Heart left ventricle (tissue), 16 donors: ENCODE measurements at regions of chr12 and their contacts with region 1.

Region 1: DNA sequence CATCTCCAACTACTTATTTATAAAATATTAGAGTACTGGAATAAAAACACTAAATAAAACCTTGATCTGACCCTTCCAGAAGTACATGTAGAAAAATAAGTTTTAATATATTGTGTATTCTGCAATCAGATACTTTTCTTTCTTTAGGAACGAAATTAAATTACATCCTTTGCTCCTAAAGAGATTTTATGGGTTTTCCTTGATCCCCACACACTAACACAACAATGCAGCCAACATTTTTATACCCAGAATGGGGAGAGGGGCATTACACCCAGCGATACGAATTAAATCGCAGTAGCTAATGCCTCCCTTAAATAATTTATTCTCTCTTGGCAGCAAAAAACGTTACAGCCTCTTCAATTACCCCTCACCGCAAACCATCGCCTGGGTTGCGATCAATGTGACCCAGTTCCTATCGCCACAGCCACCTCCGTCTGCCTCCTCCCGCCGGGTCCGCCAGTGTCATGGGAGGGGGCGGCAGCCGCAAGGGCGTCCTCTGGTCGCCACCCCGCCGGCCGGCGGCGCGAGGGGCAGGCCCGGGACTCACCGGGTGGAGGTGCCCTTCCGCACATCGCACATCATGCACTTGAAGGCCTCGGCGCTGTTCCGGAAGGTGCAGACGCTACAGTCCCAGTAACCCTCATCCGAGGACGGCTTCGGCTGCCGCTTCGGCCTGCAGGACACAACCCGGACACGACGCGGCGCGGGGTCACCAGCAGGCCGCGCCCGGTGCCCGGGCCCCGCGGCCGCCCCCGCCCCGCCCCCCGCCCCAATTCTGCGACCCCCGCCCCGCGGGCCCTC is 796 bp downstream of the YAF2 start:
- DNase-seq: peak; percentile 75 to 89 (median 82)
- ATAC-seq: peak; percentile 67 to 83 (median 75)
- H3K4me3 ChIP-seq: peak overlapping the region; percentile 56 to 98 (median 78)
- H3K27ac ChIP-seq: peak overlapping the region; percentile 82 to 97 (median 94)
- H3K4me1 ChIP-seq: peaks cover 0 to 57% (median 29%) of the 10 kb centered on the region in 12 donors
- H3K27me3 ChIP-seq: no peaks in the 10 kb centered on the region
- CTCF ChIP-seq: peak in 9 of 12 donors; percentile 10 to 60 (median 44)
- POLR2A ChIP-seq: no peak

Region 2: GRCh38 chr12:42196723-42197603 is 40.3 kb before region 1 on chr12:
- intact Hi-C with region 1: loop called in 1 of 10 experiments (anchors 5 kb)
- DNase-seq: no peak
- ATAC-seq: no peak
- H3K4me3 ChIP-seq: no peak overlapping the region
- H3K27ac ChIP-seq: no peak overlapping the region
- H3K4me1 ChIP-seq: peaks cover 0 to 32% (median 20%) of the 10 kb centered on the region in 12 donors
- H3K27me3 ChIP-seq: no peaks in the 10 kb centered on the region
- CTCF ChIP-seq: no peak
- POLR2A ChIP-seq: no peak

Region 3: GRCh38 chr12:42325653-42326474 is 88.6 kb after region 1 on chr12 and contains the starts of genes PPHLN1 and ZCRB1:
- intact Hi-C with region 1: loop called in 9 of 10 experiments (anchors 2 to 10 kb)
- DNase-seq: peak; percentile 83 to 89 (median 88)
- ATAC-seq: peak; percentile 94 to 98 (median 98)
- H3K4me3 ChIP-seq: peak within 1 kb of the TSS; percentile 47 to 96 (median 76)
- H3K27ac ChIP-seq: peak within 1 kb of the TSS; percentile 43 to 90 (median 82)
- H3K4me1 ChIP-seq: peaks cover 4 to 38% (median 25%) of the 10 kb centered on the region in 12 donors
- H3K27me3 ChIP-seq: no peaks in the 10 kb centered on the region
- CTCF ChIP-seq: no peak
- POLR2A ChIP-seq: peak in 1 of 2 donors; percentile 60
- total RNA-seq, gene PPHLN1: 25.5 to 41.1 (median 35.6) TPM
- total RNA-seq, gene ZCRB1: 30.8 to 69.0 (median 56.2) TPM

Region 4: GRCh38 chr12:42469355-42470175 is 232.3 kb after region 1 on chr12:
- intact Hi-C with region 1: loop called in 1 of 10 experiments (anchors 10 kb)
- DNase-seq: no peak
- ATAC-seq: peak in 1 of 4 donors; percentile 31
- H3K4me3 ChIP-seq: peak overlapping the region in 5 of 12 donors; percentile 3 to 52 (median 7)
- H3K27ac ChIP-seq: peak overlapping the region in 5 of 12 donors; percentile 32 to 67 (median 61)
- H3K4me1 ChIP-seq: peaks cover 3 to 64% (median 37%) of the 10 kb centered on the region in 12 donors
- H3K27me3 ChIP-seq: no peaks in the 10 kb centered on the region
- CTCF ChIP-seq: no peak
- POLR2A ChIP-seq: no peak

Region 5: GRCh38 chr12:42565633-42566032 is 328.4 kb after region 1 on chr12:
- intact Hi-C with region 1: no loop called
- DNase-seq: no peak
- ATAC-seq: peak; percentile 71 to 81 (median 76)
- H3K4me3 ChIP-seq: no peak overlapping the region
- H3K27ac ChIP-seq: peak overlapping the region in 1 of 12 donors; percentile 43
- H3K4me1 ChIP-seq: peaks cover 0 to 48% (median 25%) of the 10 kb centered on the region in 12 donors
- H3K27me3 ChIP-seq: no peaks in the 10 kb centered on the region
- CTCF ChIP-seq: peak in 7 of 12 donors; percentile 11 to 47 (median 30)
- POLR2A ChIP-seq: no peak